ENCODE measurements at regions of chr13 and their contacts with region 1.

Region 1: DNA sequence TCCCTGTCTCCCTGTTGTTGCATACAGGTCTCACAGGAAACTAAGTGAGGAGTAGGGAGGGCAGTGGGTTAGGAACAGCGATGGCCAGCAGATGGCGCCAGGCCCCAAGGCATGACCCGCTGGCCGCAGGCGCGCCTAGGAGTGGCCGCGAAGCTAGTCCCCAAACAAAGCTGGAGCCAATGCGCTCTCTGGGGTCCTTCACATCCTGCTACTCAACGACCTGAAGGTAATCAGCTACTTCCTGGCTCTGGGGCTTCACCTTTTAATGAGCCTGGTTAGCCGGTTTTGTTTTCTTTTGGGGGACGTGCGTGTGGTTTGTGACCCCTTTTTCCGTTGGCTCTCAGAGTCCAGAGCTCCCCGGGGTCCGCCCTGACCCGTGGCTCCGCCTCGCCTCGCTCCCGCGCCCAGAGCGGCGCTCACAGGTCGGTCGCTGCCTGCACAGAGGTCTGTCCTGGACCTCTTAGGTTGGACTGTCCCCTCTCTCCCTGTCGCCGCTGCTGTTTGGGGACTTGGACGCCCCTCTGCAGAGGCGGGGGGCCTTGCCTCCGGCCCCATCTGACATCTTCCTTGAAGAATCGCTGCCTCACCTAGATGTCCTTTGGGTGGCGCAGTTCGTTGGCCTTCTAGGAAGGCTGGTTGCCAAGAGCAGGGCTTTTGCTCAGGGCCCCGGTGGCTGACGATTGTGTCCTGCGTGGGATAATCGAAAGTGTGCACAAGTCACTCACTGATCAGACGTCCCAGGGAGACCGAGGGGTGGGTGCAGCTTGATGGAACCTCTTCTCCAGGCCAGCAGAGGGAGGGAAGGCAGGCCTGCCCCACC is 62.1 kb upstream of the GTF3A start:
- DNase-seq: peak; percentile 85
- ATAC-seq: peak; percentile 91
- H3K4me3 ChIP-seq: peak overlapping the region in 4 of 5 experiments; percentile 28 to 56 (median 42)
- H3K4me3 Mint-ChIP-seq: peak overlapping the region; percentile 49
- H3K27ac ChIP-seq: no peak overlapping the region
- H3K27ac Mint-ChIP-seq: no peak overlapping the region
- H3K4me1 ChIP-seq: peaks cover 10% of the 10 kb centered on the region in 2 donors
- H3K4me1 Mint-ChIP-seq: peaks cover 12% of the 10 kb centered on the region
- H3K27me3 ChIP-seq: peaks cover 0 to 30% (median 11%) of the 10 kb centered on the region in 4 experiments
- H3K27me3 Mint-ChIP-seq: peaks cover 22% of the 10 kb centered on the region
- CTCF ChIP-seq: peak; percentile 87

Region 2: DNA sequence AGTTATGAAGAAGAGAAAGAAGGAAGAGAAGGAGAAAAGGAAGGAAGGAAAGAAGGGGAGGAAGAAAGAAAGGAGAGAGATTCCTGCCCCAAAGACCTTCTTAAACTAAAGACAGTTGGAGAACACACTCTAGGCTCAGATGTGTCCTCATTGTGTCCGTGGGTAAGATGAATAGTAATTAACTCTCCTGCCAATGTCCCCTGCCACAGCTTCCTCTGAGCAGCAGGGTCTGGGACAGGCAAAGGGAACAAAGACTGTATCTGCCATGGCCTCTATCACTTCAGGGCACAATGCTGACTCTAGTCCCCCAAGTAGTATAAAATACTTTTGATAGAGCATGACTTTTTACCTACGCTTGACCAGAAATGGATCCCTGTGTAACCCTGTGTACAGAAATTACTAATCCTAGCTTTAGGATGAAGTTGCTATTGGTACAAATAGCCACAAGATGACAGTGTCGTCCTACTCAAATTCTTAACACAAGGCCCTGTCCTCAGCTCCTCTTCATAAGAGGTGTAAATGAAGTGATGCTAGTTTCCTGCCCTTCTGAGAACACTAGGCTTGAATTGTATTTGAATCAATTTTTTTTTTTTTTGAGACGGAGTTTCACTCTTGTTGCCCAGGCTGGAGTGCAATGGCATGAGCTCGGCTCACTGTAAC is 415.5 kb before region 1 on chr13:
- CTCF ChIA-PET with region 1: interaction called, 23 read pairs
- POLR2A ChIA-PET with region 1: no interaction called
- intact Hi-C with region 1: loop called (anchors 1 kb)
- DNase-seq: peak; percentile 34
- ATAC-seq: peak; percentile 21
- H3K4me3 ChIP-seq: no peak overlapping the region
- H3K4me3 Mint-ChIP-seq: no peak overlapping the region
- H3K27ac ChIP-seq: no peak overlapping the region
- H3K27ac Mint-ChIP-seq: no peak overlapping the region
- H3K4me1 ChIP-seq: no peaks in the 10 kb centered on the region
- H3K4me1 Mint-ChIP-seq: no peaks in the 10 kb centered on the region
- H3K27me3 ChIP-seq: peaks cover 0 to 3% (median 0%) of the 10 kb centered on the region in 4 experiments
- H3K27me3 Mint-ChIP-seq: peaks cover 15% of the 10 kb centered on the region
- CTCF ChIP-seq: peak; percentile 62

Region 3: DNA sequence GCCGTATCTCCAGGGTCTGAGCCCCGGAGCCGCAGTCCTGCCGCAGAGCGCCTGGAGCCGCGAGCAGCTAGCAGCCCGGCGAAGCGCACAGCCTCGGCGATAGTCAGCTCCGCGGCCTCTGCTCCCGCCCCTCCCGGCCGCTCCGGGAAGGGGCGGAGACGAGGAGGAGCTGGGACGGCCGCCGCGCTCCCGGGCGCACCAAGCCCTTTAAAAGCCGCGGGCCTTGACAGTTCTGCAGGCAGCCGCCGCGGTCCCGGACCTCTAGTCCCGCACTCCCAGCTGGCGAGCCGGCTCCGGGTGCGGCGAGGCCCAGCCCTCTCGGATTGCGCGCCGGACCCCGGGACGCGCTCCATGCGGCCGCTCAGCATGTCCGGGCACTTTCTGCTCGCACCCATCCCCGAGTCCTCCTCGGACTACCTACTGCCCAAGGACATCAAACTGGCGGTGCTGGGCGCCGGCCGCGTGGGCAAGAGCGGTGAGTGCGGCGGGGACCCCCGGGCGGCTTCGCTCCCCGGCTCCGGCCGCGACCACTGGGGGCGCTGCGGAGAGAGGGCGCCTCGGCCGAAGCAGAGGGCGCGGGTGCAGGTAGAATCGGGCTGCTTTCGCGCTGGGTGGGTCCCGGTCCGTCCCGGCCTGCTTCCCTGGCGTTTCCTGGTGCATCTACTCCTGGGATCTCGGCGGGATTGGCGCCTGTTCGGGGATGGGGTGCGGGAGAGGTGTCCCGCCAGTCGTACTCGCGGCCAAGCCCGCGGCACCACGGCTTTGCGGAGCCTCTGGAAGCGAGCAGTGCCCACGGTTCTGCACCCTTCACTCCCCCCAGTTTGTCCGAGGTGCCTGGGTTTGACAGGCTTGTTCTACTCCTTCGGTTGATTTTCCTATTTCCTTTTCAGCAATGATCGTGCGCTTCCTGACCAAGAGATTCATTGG is 91.4 kb before region 1 on chr13 and contains the start of gene RASL11A:
- CTCF ChIA-PET with region 1: interaction called, 4 read pairs
- POLR2A ChIA-PET with region 1: no interaction called
- intact Hi-C with region 1: loop called (anchors 1 kb)
- DNase-seq: peak; percentile 85
- ATAC-seq: peak; percentile 89
- H3K4me3 ChIP-seq: peak within 1 kb of the TSS; percentile 46 to 95 (median 78)
- H3K4me3 Mint-ChIP-seq: peak within 1 kb of the TSS; percentile 89
- H3K27ac ChIP-seq: peak within 1 kb of the TSS; percentile 28 to 39
- H3K27ac Mint-ChIP-seq: peak within 1 kb of the TSS; percentile 72
- H3K4me1 ChIP-seq: peaks cover 6 to 18% of the 10 kb centered on the region in 2 donors
- H3K4me1 Mint-ChIP-seq: peaks cover 33% of the 10 kb centered on the region
- H3K27me3 ChIP-seq: peaks cover 0 to 5% (median 2%) of the 10 kb centered on the region in 4 experiments
- H3K27me3 Mint-ChIP-seq: peaks cover 9% of the 10 kb centered on the region
- CTCF ChIP-seq: peak; percentile 99
- total RNA-seq, gene RASL11A: 0.89 and 1.0 TPM in 2 replicates

Region 4: DNA sequence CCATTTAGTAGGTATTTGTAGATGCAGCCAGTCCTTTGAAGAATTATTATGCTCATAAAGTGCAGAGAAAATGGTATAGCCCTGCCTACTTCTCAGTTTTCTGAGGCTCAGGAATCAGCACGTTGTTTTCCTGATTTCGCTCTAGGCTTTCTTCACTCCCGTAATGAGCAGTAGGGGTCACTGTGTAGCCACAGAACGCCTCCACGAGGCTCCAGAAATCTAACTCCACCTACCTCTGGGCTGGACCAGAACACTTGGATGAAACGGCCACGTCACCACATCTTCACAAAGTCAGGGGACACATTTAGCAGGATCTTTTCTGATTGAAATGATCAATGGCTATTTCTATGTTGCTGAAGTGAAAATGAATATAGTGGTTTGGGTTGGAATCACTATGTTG is 12.4 kb after region 1 on chr13:
- CTCF ChIA-PET with region 1: interaction called, 70 read pairs
- POLR2A ChIA-PET with region 1: no interaction called
- intact Hi-C with region 1: no loop called
- DNase-seq: peak; percentile 77
- ATAC-seq: peak; percentile 85
- H3K4me3 ChIP-seq: no peak overlapping the region
- H3K4me3 Mint-ChIP-seq: no peak overlapping the region
- H3K27ac ChIP-seq: no peak overlapping the region
- H3K27ac Mint-ChIP-seq: no peak overlapping the region
- H3K4me1 ChIP-seq: no peaks in the 10 kb centered on the region
- H3K4me1 Mint-ChIP-seq: peaks cover 2% of the 10 kb centered on the region
- H3K27me3 ChIP-seq: peaks cover 0 to 7% (median 0%) of the 10 kb centered on the region in 4 experiments
- H3K27me3 Mint-ChIP-seq: peaks cover 34% of the 10 kb centered on the region
- CTCF ChIP-seq: peak; percentile 82

Region 5: GRCh38 chr13:27476943-27477703 is 114.8 kb after region 1 on chr13:
- CTCF ChIA-PET with region 1: no interaction called
- POLR2A ChIA-PET with region 1: no interaction called
- intact Hi-C with region 1: no loop called
- DNase-seq: peak; percentile 55
- ATAC-seq: peak; percentile 76
- H3K4me3 ChIP-seq: peak overlapping the region in 1 of 5 experiments; percentile 32
- H3K4me3 Mint-ChIP-seq: peak overlapping the region; percentile 75
- H3K27ac ChIP-seq: peak overlapping the region in 1 of 2 donors; percentile 2
- H3K27ac Mint-ChIP-seq: peak overlapping the region; percentile 89
- H3K4me1 ChIP-seq: peaks cover 27 to 38% of the 10 kb centered on the region in 2 donors
- H3K4me1 Mint-ChIP-seq: peaks cover 40% of the 10 kb centered on the region
- H3K27me3 ChIP-seq: no peaks in the 10 kb centered on the region
- H3K27me3 Mint-ChIP-seq: no peaks in the 10 kb centered on the region
- CTCF ChIP-seq: no peak

Region 6: GRCh38 chr13:27977476-27978300 is 615.4 kb after region 1 on chr13:
- CTCF ChIA-PET with region 1: interaction called, 135 read pairs
- POLR2A ChIA-PET with region 1: no interaction called
- intact Hi-C with region 1: no loop called
- DNase-seq: peak; percentile 54
- ATAC-seq: no peak
- H3K4me3 ChIP-seq: no peak overlapping the region
- H3K4me3 Mint-ChIP-seq: peak overlapping the region; percentile 64
- H3K27ac ChIP-seq: no peak overlapping the region
- H3K27ac Mint-ChIP-seq: no peak overlapping the region
- H3K4me1 ChIP-seq: peaks cover 46 to 51% of the 10 kb centered on the region in 2 donors
- H3K4me1 Mint-ChIP-seq: peaks cover 39% of the 10 kb centered on the region
- H3K27me3 ChIP-seq: peaks cover 0 to 86% (median 66%) of the 10 kb centered on the region in 4 experiments
- H3K27me3 Mint-ChIP-seq: peaks cover 79% of the 10 kb centered on the region
- CTCF ChIP-seq: no peak

Measured in B cell (primary cell).